Activated B cell treated with CpG ODN at 0.5 μM for 24 hours (primary cell): ENCODE measurements at regions of chr5 and their contacts with region 1.

Region 1: GRCh38 chr5:134113902-134114875 is at the start of gene TCF7:
- DNase-seq: peak; percentile 61
- ATAC-seq: peak; percentile 91
- H3K4me3 Mint-ChIP-seq: peak within 1 kb of the TSS; percentile 90
- H3K27ac Mint-ChIP-seq: peak within 1 kb of the TSS; percentile 81
- H3K4me1 Mint-ChIP-seq: peaks cover 24% of the 10 kb centered on the region
- H3K27me3 Mint-ChIP-seq: peaks cover 10% of the 10 kb centered on the region
- CTCF ChIP-seq: no peak
- total RNA-seq, gene TCF7: 13.2 and 15.8 TPM in 2 replicates

Region 2: DNA sequence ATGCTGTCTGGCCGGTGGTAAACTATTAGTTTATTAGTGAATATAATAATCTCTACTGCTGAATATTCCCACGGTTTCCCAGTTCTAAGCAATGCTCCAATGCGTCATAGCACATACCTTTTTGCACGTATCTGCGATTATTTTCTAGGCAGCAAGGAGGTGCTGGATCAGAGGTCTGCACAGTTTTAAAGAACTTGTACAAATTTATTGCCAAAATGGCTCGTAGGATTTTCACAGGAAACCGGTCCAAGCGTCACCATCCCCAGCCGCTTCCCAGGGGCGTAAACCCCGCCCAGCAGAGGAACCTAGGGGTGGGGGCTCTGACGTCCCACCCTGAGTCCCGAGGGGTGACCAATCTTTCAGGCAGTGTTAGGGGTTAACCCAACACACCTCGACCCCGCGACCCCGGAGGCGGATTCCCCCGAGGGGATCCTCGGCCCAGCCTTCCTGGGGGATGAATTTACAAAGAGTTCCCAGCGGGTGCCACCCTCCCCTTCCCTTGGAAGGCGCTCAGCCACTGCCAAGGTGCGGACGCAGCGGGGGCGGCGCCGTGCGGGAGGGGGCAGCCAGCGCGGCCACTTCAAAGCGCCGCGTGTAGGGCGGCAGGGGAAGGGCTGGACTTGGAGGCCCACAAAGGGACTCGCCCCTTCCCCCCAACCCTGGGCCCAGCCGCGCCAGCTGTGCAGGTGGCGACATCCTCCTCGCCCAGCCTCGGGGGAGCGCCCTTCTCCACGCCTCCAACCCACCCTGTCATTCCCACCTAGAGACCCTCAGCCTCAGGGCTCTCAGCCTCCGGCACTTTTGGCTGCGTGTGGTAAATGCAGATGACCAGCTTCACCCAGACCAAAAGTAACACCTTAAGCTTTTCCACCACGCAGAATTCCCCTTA is 43.2 kb before region 1 on chr5:
- CTCF ChIA-PET with region 1: no interaction called
- POLR2A ChIA-PET with region 1: no interaction called
- intact Hi-C with region 1: loop called (anchors 1 kb)
- DNase-seq: no peak
- ATAC-seq: peak; percentile 40
- H3K4me3 Mint-ChIP-seq: peak overlapping the region; percentile 72
- H3K27ac Mint-ChIP-seq: no peak overlapping the region
- H3K4me1 Mint-ChIP-seq: peaks cover 9% of the 10 kb centered on the region
- H3K27me3 Mint-ChIP-seq: peaks cover 22% of the 10 kb centered on the region
- CTCF ChIP-seq: no peak

Region 3: DNA sequence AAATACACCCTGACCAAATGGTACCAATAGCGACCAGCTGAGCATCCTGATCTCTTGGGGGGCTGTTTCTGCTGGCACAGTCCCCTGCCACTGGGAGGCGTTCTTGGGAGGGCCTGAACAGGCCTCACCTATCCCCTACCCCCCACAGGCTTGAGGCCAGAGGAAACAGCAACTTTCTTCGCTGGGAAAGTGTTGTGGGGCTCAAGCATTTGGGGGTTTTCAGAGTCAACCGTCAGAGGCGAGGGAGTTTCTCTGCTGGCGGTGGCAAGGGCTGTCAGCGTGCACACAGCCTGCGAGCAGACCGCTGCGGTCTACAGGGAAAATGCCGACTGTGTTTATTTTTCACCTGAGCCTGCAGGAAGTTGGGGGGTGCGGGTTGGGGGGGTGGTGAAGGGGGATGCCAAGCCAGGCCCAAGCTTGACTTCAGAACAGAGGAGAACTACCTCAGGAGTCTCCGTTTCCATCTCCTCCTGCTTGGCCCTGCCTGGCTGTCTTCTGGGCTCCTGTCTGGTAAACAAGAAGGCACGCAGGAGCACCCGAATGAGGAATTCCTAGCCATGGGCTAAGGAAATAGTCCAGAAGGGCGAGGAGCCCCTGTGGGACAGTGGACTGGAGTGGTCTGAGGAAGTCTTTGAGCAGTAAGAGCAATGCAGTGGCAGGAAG is 18.3 kb after region 1 on chr5:
- CTCF ChIA-PET with region 1: no interaction called
- POLR2A ChIA-PET with region 1: interaction called, 9 read pairs
- intact Hi-C with region 1: loop called (anchors 2 kb)
- DNase-seq: peak; percentile 27
- ATAC-seq: peak; percentile 79
- H3K4me3 Mint-ChIP-seq: peak overlapping the region; percentile 35
- H3K27ac Mint-ChIP-seq: peak overlapping the region; percentile 88
- H3K4me1 Mint-ChIP-seq: peaks cover 56% of the 10 kb centered on the region
- H3K27me3 Mint-ChIP-seq: no peaks in the 10 kb centered on the region
- CTCF ChIP-seq: no peak

Region 4: DNA sequence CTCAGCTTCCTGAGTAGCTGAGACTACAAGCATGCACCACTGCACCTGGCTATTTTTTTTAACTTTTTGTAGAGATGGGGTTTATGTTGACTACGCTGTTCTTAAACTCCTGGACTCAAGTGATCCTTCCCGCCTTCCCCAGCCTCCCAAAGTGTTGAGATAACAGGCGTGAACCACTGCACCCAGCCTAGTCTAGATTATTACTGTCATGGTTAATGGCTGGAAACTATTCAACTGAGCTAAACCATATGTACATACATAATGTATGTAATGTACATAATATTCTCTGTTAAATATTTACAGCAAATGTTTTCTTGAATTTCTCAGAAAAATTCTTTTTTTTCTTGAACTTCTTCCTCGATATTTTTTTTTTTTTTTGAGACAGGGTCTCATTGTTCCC is 90.4 kb after region 1 on chr5:
- CTCF ChIA-PET with region 1: no interaction called
- POLR2A ChIA-PET with region 1: no interaction called
- intact Hi-C with region 1: no loop called
- DNase-seq: no peak
- ATAC-seq: no peak
- H3K4me3 Mint-ChIP-seq: no peak overlapping the region
- H3K27ac Mint-ChIP-seq: no peak overlapping the region
- H3K4me1 Mint-ChIP-seq: peaks cover 28% of the 10 kb centered on the region
- H3K27me3 Mint-ChIP-seq: no peaks in the 10 kb centered on the region
- CTCF ChIP-seq: no peak

Region 5: DNA sequence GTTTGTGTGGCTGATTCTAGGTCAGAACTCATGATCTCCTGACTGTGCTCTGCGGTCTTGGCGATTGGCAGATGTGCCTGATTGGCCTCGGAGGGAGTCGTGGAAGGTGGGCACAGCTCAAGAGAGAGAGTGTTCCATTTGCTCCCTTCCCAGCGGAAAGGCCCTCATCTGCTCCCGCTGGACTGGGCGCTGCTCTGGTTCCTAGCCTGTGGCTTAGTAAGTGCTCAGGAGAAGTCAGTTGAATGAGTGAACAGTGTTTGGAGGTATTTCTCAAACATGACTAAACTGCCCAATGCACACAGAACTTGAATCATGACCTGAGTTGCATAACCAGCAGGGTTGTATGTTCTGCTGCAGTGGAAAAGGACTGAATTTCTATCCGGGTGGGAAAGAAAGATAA is 1040.0 kb after region 1 on chr5:
- CTCF ChIA-PET with region 1: no interaction called
- POLR2A ChIA-PET with region 1: no interaction called
- intact Hi-C with region 1: no loop called
- DNase-seq: no peak
- ATAC-seq: no peak
- H3K4me3 Mint-ChIP-seq: no peak overlapping the region
- H3K27ac Mint-ChIP-seq: no peak overlapping the region
- H3K4me1 Mint-ChIP-seq: no peaks in the 10 kb centered on the region
- H3K27me3 Mint-ChIP-seq: peaks cover 22% of the 10 kb centered on the region
- CTCF ChIP-seq: no peak

Region 6: GRCh38 chr5:135977375-135977928 is 1863.3 kb after region 1 on chr5:
- CTCF ChIA-PET with region 1: no interaction called
- POLR2A ChIA-PET with region 1: no interaction called
- intact Hi-C with region 1: no loop called
- DNase-seq: no peak
- ATAC-seq: no peak
- H3K4me3 Mint-ChIP-seq: no peak overlapping the region
- H3K27ac Mint-ChIP-seq: no peak overlapping the region
- H3K4me1 Mint-ChIP-seq: no peaks in the 10 kb centered on the region
- H3K27me3 Mint-ChIP-seq: peaks cover 48% of the 10 kb centered on the region
- CTCF ChIP-seq: no peak